ENCODE measurements at regions of chr10 and their contacts with region 1.

Region 1: DNA sequence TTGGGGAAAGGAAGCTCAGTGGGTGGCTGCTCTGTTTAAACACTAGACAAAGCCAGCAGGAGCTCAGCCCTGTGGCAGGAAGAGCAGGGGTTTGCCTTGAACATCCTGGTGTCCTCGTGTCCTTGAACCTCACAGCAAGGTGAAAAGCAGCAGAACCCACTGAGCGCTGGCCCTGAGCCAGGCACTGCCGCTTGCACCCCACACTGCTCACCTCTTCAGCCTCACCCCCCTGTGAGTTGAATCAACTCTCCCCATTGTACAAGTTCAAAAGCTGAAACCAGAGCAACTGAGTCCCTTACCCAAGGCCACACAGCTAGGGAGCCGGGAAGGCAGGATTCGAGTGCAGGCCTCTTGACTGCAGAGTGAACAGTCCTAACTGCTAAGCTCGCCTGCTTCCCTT is 32.0 kb downstream of the SLC29A3 start:
- DNase-seq: no peak
- ATAC-seq: no peak
- H3K4me3 ChIP-seq: no peak overlapping the region
- H3K27ac ChIP-seq: no peak overlapping the region
- H3K4me1 ChIP-seq: peaks cover 17% of the 10 kb centered on the region; the same call in 1 of the 2 replicates
- H3K27me3 ChIP-seq: no peaks in the 10 kb centered on the region
- CTCF ChIP-seq: no peak

Region 2: DNA sequence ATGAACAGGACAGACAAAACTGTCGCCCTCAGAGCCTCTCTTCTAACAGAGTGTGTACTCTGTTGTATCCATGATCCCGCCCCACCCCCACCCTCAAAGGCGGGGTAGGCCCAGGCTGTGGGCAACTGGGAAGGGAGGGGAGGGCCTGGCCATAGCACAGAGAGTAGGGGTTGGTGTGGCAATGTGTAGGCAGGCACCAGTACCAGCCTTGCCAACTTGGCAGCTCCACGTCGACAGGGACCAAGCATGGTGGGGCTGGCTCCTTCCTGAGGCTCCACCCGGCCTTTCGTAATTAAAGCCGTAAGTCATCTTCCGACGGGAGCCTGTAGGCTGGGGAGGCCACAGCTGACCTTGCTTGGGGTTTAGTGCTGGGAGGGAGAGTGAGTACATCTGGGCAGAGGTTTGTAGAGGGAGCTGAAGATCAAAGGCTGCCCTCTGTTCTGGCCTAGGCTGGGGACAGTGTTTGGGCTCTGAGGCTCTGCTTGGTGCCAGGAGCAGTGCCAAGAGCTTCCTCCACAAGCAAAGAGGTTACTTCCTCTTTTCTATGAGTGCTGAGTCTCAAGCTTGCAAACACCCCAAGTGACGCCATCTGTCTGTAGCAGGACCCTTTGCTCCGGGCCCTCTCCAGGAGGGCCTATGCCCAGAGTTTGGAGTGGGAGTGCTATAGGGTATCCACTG is 246.9 kb after region 1 on chr10:
- CTCF ChIA-PET with region 1: no interaction called
- POLR2A ChIA-PET with region 1: interaction called, 29 read pairs
- intact Hi-C with region 1: no loop called
- DNase-seq: no peak
- ATAC-seq: no peak
- H3K4me3 ChIP-seq: no peak overlapping the region
- H3K27ac ChIP-seq: no peak overlapping the region
- H3K4me1 ChIP-seq: no peaks in the 10 kb centered on the region
- H3K27me3 ChIP-seq: no peaks in the 10 kb centered on the region
- CTCF ChIP-seq: no peak

Measured in PC-3 (cell line).